B cell (primary cell): ENCODE measurements at regions of chr7 and their contacts with region 1.

Region 1: GRCh38 chr7:25968205-25968993 is 183.6 kb upstream of the NFE2L3 start:
- DNase-seq: peak; percentile 80
- ATAC-seq: peak; percentile 84
- H3K4me3 ChIP-seq: peak overlapping the region in 3 of 5 experiments; percentile 8 to 37 (median 28)
- H3K4me3 Mint-ChIP-seq: peak overlapping the region; percentile 78
- H3K27ac ChIP-seq: peak overlapping the region; percentile 57 to 75
- H3K27ac Mint-ChIP-seq: peak overlapping the region; percentile 83
- H3K4me1 ChIP-seq: peaks cover 30 to 42% of the 10 kb centered on the region in 2 donors
- H3K4me1 Mint-ChIP-seq: peaks cover 39% of the 10 kb centered on the region
- H3K27me3 ChIP-seq: peaks cover 0 to 23% (median 8%) of the 10 kb centered on the region in 4 experiments
- H3K27me3 Mint-ChIP-seq: peaks cover 16% of the 10 kb centered on the region
- CTCF ChIP-seq: no peak

Region 2: DNA sequence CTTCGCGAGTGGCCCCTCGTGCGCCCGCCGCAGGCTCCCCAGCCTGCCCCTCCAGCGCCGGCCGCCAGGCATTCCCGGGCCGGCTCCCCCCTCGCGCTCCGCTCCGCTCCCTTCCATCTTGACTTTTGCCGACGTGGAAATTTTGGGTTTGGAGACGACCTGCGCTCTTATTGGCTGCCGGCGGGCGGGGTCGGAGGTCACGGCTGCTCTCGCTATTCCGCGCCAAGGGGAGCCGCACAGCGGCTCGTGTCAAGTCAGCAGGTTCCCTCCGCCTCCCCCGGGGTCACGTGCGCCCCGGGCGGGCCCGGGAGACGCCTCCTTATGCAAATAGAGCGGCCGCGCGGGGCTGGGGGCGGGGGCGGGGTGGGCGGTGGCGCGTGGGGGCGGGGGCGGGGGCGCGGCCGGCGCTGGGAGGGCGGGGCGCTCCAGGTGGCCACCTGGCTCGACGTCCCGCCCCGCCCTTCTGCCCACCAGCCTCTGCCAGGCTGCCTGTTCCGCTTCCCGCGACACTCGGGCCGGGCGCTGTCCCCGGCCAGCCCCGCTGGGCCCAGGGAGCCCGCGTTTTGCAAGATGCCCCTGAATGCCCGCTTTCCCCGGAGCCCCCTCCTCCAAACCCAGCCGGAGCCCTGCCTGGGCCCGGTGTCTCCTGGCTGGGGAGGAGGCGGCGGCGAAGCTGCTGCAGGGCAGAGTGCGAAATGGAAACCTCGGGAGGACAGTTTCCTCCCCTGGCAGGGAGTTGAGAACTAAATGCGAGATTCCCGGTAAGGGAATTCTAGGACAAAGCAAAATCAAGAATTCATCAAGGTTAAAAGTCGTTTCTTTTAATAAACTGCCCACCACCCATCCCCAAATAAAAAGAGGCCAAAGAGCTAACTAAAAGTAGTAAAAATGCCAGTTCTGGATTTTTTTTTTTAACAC is 17.1 kb before region 1 on chr7:
- CTCF ChIA-PET with region 1: interaction called, 7 read pairs
- POLR2A ChIA-PET with region 1: interaction called, 7 read pairs
- intact Hi-C with region 1: loop called (anchors 1 kb)
- DNase-seq: peak; percentile 90
- ATAC-seq: peak; percentile 90
- H3K4me3 ChIP-seq: peak overlapping the region; percentile 15 to 69 (median 51)
- H3K4me3 Mint-ChIP-seq: peak overlapping the region; percentile 89
- H3K27ac ChIP-seq: no peak overlapping the region
- H3K27ac Mint-ChIP-seq: peak overlapping the region; percentile 78
- H3K4me1 ChIP-seq: peaks cover 32 to 33% of the 10 kb centered on the region in 2 donors
- H3K4me1 Mint-ChIP-seq: peaks cover 35% of the 10 kb centered on the region
- H3K27me3 ChIP-seq: peaks cover 0 to 38% (median 33%) of the 10 kb centered on the region in 4 experiments
- H3K27me3 Mint-ChIP-seq: peaks cover 30% of the 10 kb centered on the region
- CTCF ChIP-seq: no peak

Region 3: DNA sequence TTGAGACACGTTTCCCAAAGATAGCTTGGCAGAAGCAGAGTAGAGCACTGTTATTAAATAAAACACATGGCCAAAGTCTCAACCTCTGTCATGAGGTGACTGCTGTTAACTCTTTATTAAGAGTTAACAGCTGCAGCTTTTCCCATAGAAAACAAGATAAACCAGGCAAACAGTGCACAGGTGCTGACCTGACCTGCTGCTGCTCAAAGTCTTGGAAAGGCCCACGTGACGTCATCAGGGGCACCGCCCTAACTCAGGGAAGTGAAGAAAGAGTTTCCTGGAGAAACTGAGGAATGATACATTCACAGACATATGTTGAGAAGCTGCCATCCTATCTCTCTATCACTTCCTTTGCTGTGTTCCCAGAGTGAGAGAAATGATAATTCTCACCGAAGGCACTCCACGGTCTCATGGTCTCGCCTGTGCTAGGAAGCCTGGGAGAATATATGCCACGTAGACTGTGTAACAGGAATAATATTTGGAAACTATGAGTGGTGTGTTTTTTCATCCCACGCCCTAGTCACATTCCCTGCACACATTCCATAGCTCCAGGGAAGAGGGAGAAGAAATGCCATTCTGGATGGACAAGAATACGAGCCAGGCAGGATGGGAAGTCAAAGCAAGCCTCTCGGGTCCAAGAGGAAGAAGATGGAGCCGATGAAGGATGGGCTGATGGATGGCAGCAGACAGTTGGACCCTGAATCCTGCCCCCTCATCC is 37.4 kb after region 1 on chr7:
- CTCF ChIA-PET with region 1: no interaction called
- POLR2A ChIA-PET with region 1: interaction called, 13 read pairs
- intact Hi-C with region 1: no loop called
- DNase-seq: no peak
- ATAC-seq: no peak
- H3K4me3 ChIP-seq: no peak overlapping the region
- H3K4me3 Mint-ChIP-seq: no peak overlapping the region
- H3K27ac ChIP-seq: no peak overlapping the region
- H3K27ac Mint-ChIP-seq: no peak overlapping the region
- H3K4me1 ChIP-seq: peaks cover 1 to 2% of the 10 kb centered on the region in 2 donors
- H3K4me1 Mint-ChIP-seq: peaks cover 1% of the 10 kb centered on the region
- H3K27me3 ChIP-seq: peaks cover 0 to 45% (median 21%) of the 10 kb centered on the region in 4 experiments
- H3K27me3 Mint-ChIP-seq: peaks cover 70% of the 10 kb centered on the region
- CTCF ChIP-seq: no peak

Region 4: DNA sequence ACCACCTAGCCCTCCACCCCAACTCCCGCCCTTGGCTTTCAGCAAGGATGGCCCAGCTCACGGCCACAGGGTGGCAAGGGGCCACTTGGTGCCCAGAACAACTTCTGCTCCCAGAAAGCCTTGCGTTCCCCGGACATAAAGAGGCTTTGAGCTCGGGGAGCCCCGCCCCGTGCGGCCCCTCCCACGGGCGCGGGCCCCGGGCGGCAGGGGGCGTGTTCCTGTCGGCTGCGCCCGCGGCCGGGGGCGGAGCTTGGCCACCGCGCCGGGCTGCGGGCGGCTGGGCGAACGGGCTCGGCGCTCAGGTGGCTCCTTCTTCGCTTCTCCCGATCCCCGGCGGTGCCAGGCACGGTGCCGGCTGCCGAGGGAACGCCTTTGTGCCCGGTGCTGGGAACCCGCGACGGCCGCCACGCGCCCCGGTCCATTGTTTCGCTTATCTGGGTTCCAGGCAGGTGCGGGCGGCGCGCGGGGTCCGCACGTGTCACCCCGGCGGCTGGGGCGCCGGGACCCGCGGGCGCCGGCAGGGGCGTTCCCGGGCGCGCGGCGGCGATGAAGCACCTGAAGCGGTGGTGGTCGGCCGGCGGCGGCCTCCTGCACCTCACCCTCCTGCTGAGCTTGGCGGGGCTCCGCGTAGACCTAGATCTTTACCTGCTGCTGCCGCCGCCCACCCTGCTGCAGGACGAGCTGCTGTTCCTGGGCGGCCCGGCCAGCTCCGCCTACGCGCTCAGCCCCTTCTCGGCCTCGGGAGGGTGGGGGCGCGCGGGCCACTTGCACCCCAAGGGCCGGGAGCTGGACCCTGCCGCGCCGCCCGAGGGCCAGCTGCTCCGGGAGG is 183.8 kb after region 1 on chr7 and contains the start of gene NFE2L3:
- CTCF ChIA-PET with region 1: no interaction called
- POLR2A ChIA-PET with region 1: no interaction called
- intact Hi-C with region 1: loop called (anchors 5 kb)
- DNase-seq: peak; percentile 89
- ATAC-seq: peak; percentile 89
- H3K4me3 ChIP-seq: peak within 1 kb of the TSS; percentile 35 to 90 (median 62)
- H3K4me3 Mint-ChIP-seq: peak within 1 kb of the TSS; percentile 97
- H3K27ac ChIP-seq: peak within 1 kb of the TSS; percentile 16 to 65
- H3K27ac Mint-ChIP-seq: peak within 1 kb of the TSS; percentile 88
- H3K4me1 ChIP-seq: peaks cover 34 to 42% of the 10 kb centered on the region in 2 donors
- H3K4me1 Mint-ChIP-seq: peaks cover 48% of the 10 kb centered on the region
- H3K27me3 ChIP-seq: no peaks in the 10 kb centered on the region
- H3K27me3 Mint-ChIP-seq: no peaks in the 10 kb centered on the region
- CTCF ChIP-seq: no peak
- total RNA-seq, gene NFE2L3: 1.6 and 4.5 TPM in 2 replicates

Region 5: GRCh38 chr7:26398756-26399501 is 430.5 kb after region 1 on chr7:
- CTCF ChIA-PET with region 1: no interaction called
- POLR2A ChIA-PET with region 1: interaction called, 4 read pairs
- intact Hi-C with region 1: loop called (anchors 10 kb)
- DNase-seq: peak; percentile 95
- ATAC-seq: peak; percentile 86
- H3K4me3 ChIP-seq: peak overlapping the region in 4 of 5 experiments; percentile 50 to 70 (median 64)
- H3K4me3 Mint-ChIP-seq: peak overlapping the region; percentile 99
- H3K27ac ChIP-seq: peak overlapping the region; percentile 79 to 81
- H3K27ac Mint-ChIP-seq: peak overlapping the region; percentile 100
- H3K4me1 ChIP-seq: peaks cover 20 to 28% of the 10 kb centered on the region in 2 donors
- H3K4me1 Mint-ChIP-seq: peaks cover 32% of the 10 kb centered on the region
- H3K27me3 ChIP-seq: peaks cover 0 to 8% (median 0%) of the 10 kb centered on the region in 4 experiments
- H3K27me3 Mint-ChIP-seq: peaks cover 3% of the 10 kb centered on the region
- CTCF ChIP-seq: no peak